GM10248 (cell line): ENCODE measurements at regions of chr1 and their contacts with region 1.

Region 1: GRCh38 chr1:39919545-39919944 is 17.8 kb upstream of the MYCL start:
- DNase-seq: peak; percentile 87
- CTCF ChIP-seq: peak; percentile 58

Region 2: DNA sequence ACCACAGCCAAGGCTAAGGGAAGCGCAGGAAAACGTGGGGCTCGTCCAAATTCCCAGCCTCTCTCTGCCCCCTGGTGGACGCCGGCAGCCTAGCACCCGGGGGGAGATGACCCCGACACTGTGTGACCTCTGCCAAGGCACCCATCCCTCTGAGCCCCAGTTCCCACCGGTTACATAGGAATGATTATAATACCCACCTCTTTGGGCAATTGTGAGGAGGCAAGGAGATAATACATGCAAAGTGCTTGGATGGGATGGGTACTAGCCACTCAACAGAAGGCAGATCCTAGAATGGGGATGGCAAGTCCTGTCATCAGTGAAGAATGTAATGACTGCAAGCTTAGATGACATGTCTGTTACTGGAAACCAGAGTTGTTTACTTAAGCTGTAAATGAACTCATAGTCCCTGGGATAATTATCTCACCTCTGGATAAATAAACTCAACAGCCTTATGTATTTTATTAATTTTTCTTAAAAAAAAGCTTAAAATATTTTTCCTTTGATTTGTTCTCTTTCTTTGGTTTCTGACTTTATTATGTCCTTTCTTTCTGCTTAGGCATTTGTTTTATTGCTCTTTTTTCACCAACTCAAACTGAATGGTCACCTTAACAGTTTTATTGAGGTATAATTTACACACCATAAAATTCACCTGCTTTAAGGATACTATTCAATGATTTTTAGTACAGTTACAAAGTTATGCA is 119.6 kb before region 1 on chr1:
- CTCF ChIA-PET with region 1: interaction called, 24 read pairs
- POLR2A ChIA-PET with region 1: no interaction called
- DNase-seq: peak; percentile 73
- CTCF ChIP-seq: peak; percentile 86

Region 3: GRCh38 chr1:39901698-39902459 is 17.7 kb before region 1 on chr1 and contains the start of gene MYCL:
- CTCF ChIA-PET with region 1: interaction called, 87 read pairs
- POLR2A ChIA-PET with region 1: no interaction called
- DNase-seq: peak; percentile 87
- CTCF ChIP-seq: peak; percentile 69

Region 4: DNA sequence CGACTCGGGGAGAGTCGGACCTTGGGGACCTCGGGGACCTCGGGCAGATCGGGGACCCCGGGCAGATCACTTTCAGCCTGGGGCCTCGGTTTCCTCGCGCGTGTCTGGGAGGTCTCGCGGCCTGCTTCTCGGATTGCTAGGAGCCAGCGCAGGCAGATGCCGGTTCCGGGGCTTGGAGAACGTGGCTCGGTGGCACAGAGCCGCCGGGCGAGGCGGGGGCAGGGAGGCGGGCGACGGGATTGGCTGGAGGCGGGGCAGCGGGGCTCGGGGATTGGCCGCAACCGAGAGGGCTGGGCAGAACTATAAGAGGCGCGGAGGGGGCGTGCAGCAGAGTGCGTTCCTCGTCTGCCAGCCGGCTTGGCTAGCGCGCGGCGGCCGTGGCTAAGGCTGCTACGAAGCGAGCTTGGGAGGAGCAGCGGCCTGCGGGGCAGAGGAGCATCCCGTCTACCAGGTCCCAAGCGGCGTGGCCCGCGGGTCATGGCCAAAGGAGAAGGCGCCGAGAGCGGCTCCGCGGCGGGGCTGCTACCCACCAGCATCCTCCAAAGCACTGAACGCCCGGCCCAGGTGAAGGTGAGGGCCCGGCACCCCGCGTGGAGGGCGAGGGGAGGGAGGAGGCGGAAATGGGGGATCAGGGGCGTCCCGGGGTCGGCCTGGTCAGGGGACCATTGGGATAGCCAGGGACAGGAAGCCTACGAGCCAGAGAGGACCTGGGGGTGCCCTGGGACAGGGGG is 35.4 kb after region 1 on chr1 and contains the start of gene MFSD2A:
- CTCF ChIA-PET with region 1: interaction called, 97 read pairs
- POLR2A ChIA-PET with region 1: interaction called, 3 read pairs
- DNase-seq: peak; percentile 93
- CTCF ChIP-seq: no peak

Region 5: GRCh38 chr1:39981957-39982356 is 62.4 kb after region 1 on chr1:
- CTCF ChIA-PET with region 1: interaction called, 13 read pairs
- POLR2A ChIA-PET with region 1: no interaction called
- DNase-seq: no peak
- CTCF ChIP-seq: no peak

Region 6: DNA sequence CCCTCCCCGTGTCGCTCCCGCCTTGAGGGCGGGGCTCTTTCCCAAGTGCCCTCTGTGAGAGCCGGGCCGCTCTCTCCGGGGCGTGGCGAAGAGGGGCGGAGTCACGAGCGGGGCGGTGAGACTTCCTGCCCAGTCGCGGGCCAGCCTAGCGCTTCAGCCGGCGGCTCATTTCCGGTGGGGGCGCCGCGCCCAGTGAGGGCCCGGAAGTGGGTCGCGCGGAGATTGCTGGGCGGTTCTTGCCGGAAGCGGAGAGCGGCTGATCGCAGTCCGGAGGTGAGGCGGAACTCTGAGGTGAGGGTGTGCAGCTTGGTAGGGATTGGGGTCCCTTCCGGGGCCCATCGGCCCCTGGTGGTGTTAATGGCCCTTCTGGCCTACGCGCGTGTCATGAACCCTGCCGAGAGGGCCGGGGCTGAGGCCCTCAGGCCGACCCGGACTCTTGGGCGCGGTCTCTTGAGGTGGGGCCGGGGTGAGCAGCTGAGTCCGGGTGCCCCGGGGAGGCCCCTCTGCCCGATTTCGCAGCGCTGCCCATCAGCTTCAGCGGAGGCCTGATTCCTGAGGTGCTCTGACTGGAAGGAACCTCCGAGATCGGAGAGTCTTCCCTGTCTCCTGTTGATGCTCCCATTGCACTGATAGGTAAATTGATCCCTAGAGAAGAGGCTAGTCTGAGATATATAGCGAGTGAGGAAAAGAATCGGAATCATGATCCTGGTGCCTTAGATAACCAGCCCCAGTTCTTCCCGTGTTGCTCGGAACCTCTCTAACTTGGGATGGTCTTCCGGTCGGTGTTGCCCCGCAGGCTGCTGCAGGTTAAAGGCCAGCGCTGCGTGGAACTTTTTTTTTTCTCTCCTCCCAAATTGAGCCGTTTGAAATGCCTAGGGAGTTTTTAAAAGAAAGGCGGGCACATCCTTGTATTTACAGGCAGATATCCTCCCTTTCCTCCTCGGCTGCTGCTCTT is 121.2 kb after region 1 on chr1 and contains the start of gene CAP1:
- CTCF ChIA-PET with region 1: interaction called, 171 read pairs
- POLR2A ChIA-PET with region 1: no interaction called
- DNase-seq: peak; percentile 99
- CTCF ChIP-seq: no peak